ENCODE measurements at regions of chr2 and their contacts with region 1.

Region 1: GRCh38 chr2:240232961-240233893 is 92.8 kb upstream of the OTOS start:
- DNase-seq: peak; percentile 89
- ATAC-seq: peak; percentile 81

Region 2: DNA sequence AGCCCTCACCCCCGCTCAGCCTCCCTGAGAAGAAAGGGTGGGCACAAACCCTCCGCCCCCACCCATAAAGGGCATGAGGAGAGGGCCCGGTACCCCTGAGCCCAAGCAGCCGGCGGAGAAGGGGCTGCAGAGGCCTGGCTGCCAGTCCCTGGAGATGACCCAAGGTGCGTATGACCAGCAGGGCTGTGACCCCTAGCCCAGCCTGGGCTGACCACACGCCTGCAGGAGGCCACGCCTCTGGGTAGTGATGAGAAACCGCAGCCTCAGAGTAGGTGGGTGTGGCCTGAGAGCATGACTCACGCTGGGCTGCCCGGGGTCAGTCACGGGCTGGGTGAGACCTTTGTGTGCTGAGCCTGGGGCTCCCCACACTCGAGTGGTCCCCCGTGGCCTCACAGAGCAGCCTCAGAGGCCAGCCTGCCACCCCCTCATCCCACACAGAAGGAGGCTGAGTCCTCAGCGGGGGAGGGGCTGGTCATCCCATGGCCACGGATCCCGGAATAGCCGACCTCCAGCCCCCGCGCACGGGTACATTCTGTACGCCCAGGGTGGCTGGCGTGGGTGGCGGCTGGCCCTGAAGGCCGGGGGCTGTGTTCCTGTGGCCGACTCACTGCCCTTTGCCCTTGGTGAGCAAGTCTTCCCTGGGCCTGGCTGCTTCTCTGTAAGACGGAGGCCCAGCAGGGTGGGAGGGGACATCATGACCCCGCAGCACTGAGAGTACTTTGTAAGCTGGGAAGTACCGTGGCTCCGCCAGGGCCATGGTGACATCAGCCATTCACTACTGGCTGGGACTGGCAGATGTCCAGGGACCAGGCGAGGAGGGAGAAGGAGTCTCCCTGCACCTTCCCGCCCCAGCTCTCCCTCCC is 18.0 kb after region 1 on chr2:
- intact Hi-C with region 1: loop called (anchors 2 kb)
- DNase-seq: peak; percentile 94
- ATAC-seq: peak; percentile 91

Region 3: DNA sequence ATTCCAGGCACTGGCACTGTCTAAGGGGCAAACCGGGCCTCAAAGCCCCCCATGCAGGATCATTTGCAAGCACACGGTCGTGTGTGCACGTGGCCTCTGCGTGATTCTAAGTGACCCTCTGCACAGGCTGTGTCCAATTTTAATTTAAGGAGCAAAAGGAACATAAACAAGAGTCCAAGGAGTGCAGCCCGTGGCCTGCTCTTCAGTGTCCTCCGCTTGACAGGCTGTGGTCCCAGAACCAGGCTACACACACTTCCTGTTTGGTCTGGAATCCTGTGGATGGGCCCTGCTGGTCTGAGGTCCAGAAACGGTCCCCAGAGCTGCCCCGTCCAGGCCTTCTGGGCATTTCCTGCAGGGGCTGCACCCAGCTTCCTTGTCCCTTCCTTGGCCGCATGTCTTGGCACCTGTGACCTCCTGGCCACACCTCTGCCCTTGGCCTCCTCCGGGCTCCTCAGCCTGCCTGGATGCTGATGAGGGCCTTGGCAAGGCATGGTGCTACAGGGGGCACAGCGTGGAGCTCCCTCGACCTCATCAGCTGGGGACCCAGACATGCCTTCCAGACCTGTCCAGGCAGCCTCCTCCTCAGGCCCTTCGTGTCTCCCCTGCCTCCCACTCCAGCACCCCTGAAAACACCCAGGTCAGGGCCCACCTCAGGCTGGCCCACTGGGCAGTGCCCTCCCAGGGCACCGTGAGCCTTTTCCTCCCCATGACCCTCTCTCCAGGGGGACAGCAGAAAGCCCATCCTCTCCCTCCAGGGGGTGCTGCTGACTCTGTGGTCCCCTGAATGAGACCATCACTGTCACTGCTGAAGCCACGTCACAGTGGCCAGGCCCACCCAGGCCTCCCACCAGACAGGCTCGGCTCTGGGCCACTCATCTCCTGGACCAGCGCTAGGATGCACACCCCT is 65.8 kb after region 1 on chr2:
- intact Hi-C with region 1: loop called (anchors 1 kb)
- DNase-seq: no peak
- ATAC-seq: no peak

Region 4: DNA sequence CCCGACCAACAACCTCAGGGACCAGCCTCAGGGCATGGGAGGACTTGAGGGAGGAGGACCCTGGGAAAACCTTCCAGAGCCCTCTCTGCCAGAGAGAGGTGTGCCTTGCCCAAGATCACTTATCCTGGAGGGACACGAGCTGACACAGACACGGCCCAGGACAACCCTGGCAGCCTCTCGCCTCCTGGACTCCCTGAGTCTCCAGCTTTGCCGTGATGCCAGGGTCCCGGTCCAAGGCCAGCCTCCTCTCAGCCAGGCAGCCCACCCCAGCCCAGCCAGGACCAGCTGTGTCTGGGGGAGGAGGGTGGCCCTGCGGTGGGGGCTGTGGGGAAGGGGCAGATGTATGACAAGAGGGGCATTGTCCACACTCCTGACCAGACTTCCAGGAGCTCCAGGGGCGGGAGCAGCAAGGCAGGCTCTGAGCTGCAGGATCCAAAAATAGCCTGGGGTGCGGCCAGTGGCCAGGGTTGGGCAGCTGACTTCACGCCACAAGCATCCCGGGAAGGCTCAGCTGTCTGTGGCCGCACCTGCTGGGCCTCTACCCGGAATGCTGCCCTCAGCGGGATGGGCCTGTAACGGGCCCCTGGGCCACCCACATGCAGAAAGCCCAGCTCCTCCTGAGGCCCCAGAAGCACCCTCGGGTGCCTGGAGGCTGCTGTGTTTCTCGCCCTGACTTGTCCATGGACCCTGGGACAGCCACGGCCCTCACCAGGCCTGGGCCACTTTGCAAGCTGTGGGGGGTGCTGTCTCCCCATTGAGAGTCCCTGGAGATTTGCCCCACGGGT is 136.8 kb after region 1 on chr2:
- intact Hi-C with region 1: loop called (anchors 2 kb)
- DNase-seq: peak; percentile 78
- ATAC-seq: peak; percentile 73

Region 5: DNA sequence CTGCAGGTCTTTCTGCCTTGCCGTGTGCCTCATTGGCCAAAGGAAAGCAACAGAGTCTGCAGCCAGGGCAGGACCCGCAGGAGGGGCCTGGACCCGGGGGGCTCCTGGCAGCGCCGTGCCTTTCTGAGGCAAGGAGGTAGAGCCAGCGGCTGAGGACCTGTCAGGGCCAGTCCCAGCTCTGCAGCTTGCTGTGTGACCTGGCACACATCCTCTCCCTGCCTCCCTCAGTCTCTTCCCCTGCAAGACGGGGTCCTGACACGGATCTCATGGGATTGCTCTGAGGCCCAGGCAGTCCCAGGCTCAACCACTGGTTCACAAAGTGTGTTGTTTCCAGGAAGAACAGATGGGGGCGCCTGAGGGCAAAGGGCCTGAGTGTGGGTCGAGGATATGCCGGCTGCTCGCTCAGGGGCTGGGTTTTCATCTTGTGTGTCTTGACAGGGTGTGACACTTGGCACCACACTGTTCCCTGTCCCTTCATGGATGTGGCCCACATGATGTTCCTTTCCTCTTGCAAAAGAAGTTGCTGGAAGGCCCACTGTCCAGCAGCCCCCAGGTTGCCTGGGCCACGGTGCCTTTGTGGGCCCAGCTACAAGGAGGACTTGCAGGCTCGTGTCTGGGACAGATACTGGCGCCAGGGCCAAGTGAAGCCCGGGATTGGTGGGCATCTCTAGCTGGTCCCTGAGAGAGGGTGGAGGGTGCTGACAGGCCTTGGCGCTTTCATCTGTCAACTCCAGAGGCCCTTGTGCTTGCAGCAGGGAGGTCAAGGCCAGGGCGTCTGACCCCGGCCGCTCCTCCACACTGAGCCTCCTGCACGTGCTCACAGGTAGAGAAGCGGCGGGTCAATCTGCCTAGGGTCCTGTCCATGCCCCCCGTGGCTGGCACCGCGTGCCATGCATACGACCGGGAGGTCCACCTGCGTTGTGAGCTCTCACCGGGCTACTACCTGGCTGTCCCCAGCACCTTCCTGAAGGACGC is 362.6 kb after region 1 on chr2:
- intact Hi-C with region 1: loop called (anchors 10 kb)
- DNase-seq: peak; percentile 73
- ATAC-seq: peak; percentile 27